Heart left ventricle (tissue), 16 donors: ENCODE measurements at regions of chr9 and their contacts with region 1.

Region 1: GRCh38 chr9:92600462-92601261 is 64.9 kb upstream of the ECM2 start:
- DNase-seq: peak in 1 of 5 donors; percentile 54
- ATAC-seq: peak; percentile 44 to 76 (median 69)
- H3K4me3 ChIP-seq: no peak overlapping the region
- H3K27ac ChIP-seq: peak overlapping the region; percentile 36 to 90 (median 64)
- H3K4me1 ChIP-seq: peaks cover 0 to 54% (median 14%) of the 10 kb centered on the region in 12 donors
- H3K27me3 ChIP-seq: no peaks in the 10 kb centered on the region
- CTCF ChIP-seq: no peak
- POLR2A ChIP-seq: no peak

Region 2: GRCh38 chr9:92488681-92489550 is 111.7 kb before region 1 on chr9:
- intact Hi-C with region 1: loop called in 3 of 10 experiments (anchors 5 to 10 kb)
- DNase-seq: no peak
- ATAC-seq: no peak
- H3K4me3 ChIP-seq: no peak overlapping the region
- H3K27ac ChIP-seq: peak overlapping the region in 5 of 12 donors; percentile 2 to 45 (median 33)
- H3K4me1 ChIP-seq: peaks cover 0 to 42% (median 5%) of the 10 kb centered on the region in 12 donors
- H3K27me3 ChIP-seq: no peaks in the 10 kb centered on the region
- CTCF ChIP-seq: no peak
- POLR2A ChIP-seq: no peak

Region 3: GRCh38 chr9:92564504-92564903 is 36.2 kb before region 1 on chr9:
- intact Hi-C with region 1: no loop called
- DNase-seq: no peak
- ATAC-seq: peak in 3 of 4 donors; percentile 37 to 61 (median 54)
- H3K4me3 ChIP-seq: peak overlapping the region in 1 of 12 donors; percentile 3
- H3K27ac ChIP-seq: peak overlapping the region in 5 of 12 donors; percentile 31 to 74 (median 65)
- H3K4me1 ChIP-seq: peaks cover 0 to 33% (median 5%) of the 10 kb centered on the region in 12 donors
- H3K27me3 ChIP-seq: no peaks in the 10 kb centered on the region
- CTCF ChIP-seq: no peak
- POLR2A ChIP-seq: no peak